Breast epithelium (tissue), 4 donors: ENCODE measurements at regions of chr9 and their contacts with region 1.

Region 1: GRCh38 chr9:70111042-70111602 is 67.5 kb downstream of the MAMDC2 start:
- DNase-seq: peak; percentile 68 to 75
- H3K4me3 ChIP-seq: no peak overlapping the region
- H3K27ac ChIP-seq: peak overlapping the region in 1 of 2 donors; percentile 9
- H3K4me1 ChIP-seq: no peaks in the 10 kb centered on the region
- H3K27me3 ChIP-seq: no peaks in the 10 kb centered on the region
- CTCF ChIP-seq: peak; percentile 30 to 86 (median 81)
- POLR2A ChIP-seq: no peak

Region 2: GRCh38 chr9:69976152-69976551 is 135.0 kb before region 1 on chr9:
- intact Hi-C with region 1: loop called (anchors 5 kb)
- DNase-seq: no peak
- H3K4me3 ChIP-seq: no peak overlapping the region
- H3K27ac ChIP-seq: peak overlapping the region; percentile 32 to 41
- H3K4me1 ChIP-seq: no peaks in the 10 kb centered on the region
- H3K27me3 ChIP-seq: no peaks in the 10 kb centered on the region
- CTCF ChIP-seq: no peak
- POLR2A ChIP-seq: no peak

Region 3: GRCh38 chr9:70043689-70044489 is 67.2 kb before region 1 on chr9 and contains the start of gene MAMDC2:
- intact Hi-C with region 1: loop called (anchors 5 kb)
- DNase-seq: peak in 1 of 2 donors; percentile 46
- H3K4me3 ChIP-seq: peak within 1 kb of the TSS; percentile 62 to 75 (median 68)
- H3K27ac ChIP-seq: peak within 1 kb of the TSS; percentile 79 to 82
- H3K4me1 ChIP-seq: peaks cover 2 to 22% of the 10 kb centered on the region in 2 donors
- H3K27me3 ChIP-seq: no peaks in the 10 kb centered on the region
- CTCF ChIP-seq: no peak
- POLR2A ChIP-seq: no peak
- total RNA-seq, gene MAMDC2: 17.0 to 33.9 (median 18.7) TPM